ENCODE measurements at regions of chr21 and their contacts with region 1.

Region 1: GRCh38 chr21:16323596-16323995 is 593.8 kb downstream of the USP25 start:
- DNase-seq: no peak
- H3K4me3 ChIP-seq: no peak overlapping the region
- H3K27ac ChIP-seq: no peak overlapping the region
- H3K4me1 ChIP-seq: peaks cover 0 to 10% (median 5%) of the 10 kb centered on the region in 4 donors
- H3K27me3 ChIP-seq: no peaks in the 10 kb centered on the region
- CTCF ChIP-seq: no peak
- EP300 ChIP-seq: no peak
- POLR2A ChIP-seq: no peak

Region 2: DNA sequence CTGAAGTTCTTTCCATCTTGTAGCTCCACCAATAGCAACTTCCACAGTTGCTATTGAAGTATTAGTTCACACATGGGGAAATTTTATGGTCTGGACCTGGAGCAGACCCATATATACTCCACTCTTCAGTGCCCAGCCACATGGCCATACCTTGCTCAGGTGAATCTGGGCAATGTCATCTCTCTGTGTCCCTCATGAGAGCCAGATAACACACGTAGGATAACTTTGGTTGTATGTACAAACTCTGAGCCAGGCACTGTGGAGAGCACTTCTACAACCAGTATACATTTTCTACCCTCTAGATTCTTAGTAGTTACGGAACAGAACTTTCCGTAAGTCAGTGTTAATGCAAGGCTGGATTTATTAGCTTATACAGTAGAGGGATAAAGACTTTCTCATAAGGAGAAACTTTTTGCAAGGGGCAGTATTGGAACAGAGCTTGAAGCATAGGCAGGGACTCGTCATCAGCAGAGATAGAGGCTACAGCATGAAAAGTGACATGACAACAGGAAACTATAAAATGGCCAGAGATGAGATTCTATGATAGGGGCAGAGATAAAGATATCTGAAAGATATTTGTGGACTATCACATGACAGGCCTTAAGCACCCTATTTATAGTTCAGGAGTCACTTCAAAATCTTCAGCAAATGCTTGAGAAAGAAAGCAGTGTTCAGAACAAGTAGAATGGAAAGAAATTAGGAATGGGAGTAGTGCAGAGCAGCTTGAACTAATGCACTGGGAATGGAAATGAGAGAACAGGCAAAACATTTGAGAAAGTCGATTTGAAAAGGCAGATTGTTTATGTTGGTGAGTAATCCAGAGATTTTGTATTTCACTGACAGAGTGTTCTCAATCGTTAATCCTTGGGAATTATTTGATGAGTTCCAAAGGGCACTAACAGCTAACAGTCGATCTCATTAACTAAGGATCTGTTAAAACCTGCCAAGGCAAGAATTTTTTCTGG is 112.0 kb before region 1 on chr21:
- intact Hi-C with region 1: loop called (anchors 10 kb)
- DNase-seq: no peak
- H3K4me3 ChIP-seq: peak overlapping the region in 2 of 4 donors; percentile 8 to 14
- H3K27ac ChIP-seq: peak overlapping the region; percentile 30 to 59 (median 56)
- H3K4me1 ChIP-seq: peaks cover 0 to 25% (median 16%) of the 10 kb centered on the region in 4 donors
- H3K27me3 ChIP-seq: no peaks in the 10 kb centered on the region
- CTCF ChIP-seq: no peak
- EP300 ChIP-seq: no peak
- POLR2A ChIP-seq: no peak